CD4-positive, alpha-beta memory T cell (primary cell): ENCODE measurements at regions of chr4 and their contacts with region 1.

Region 1: DNA sequence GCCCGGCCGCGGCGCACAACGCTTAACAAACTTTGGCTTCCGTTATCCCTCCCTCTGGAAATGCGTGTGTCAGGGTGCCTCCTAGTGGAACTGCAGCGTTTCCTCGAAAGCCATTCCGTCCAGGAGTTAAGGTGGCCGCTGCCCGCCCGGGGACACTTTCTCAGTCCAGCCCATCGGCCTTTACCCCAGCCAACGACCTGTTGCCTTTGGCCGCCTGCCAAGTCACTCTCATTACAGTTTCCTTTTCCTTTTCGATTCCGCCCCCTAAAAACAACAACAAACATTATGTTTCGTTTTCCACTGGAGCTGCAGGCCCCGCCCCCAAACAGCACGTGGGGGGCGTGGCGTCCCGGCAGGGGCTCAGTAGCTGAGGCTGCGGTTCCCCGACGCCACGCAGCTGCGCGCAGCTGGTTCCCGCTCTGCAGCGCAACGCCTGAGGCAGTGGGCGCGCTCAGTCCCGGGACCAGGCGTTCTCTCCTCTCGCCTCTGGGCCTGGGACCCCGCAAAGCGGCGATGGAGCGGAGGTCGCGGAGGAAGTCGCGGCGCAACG is at the start of gene HERC5:
- DNase-seq: peak; percentile 92 to 96 (median 95)
- H3K4me3 ChIP-seq: peak within 1 kb of the TSS; percentile 76 to 96
- H3K4me3 Mint-ChIP-seq: peak within 1 kb of the TSS; percentile 96 to 100 (median 100)
- H3K27ac ChIP-seq: peak within 1 kb of the TSS; percentile 71
- H3K27ac Mint-ChIP-seq: peak within 1 kb of the TSS; percentile 89 to 100 (median 100)
- H3K4me1 ChIP-seq: peaks cover 28% of the 10 kb centered on the region
- H3K4me1 Mint-ChIP-seq: peaks cover 21 to 37% (median 28%) of the 10 kb centered on the region in 4 donors
- H3K27me3 ChIP-seq: no peaks in the 10 kb centered on the region
- H3K27me3 Mint-ChIP-seq: no peaks in the 10 kb centered on the region
- total RNA-seq, gene HERC5: 18.6 to 22.1 TPM

Region 2: GRCh38 chr4:87838890-87839591 is 617.8 kb before region 1 on chr4:
- CTCF ChIA-PET with region 1: no interaction called
- POLR2A ChIA-PET with region 1: no interaction called
- intact Hi-C with region 1: no loop called
- DNase-seq: no peak
- H3K4me3 ChIP-seq: no peak overlapping the region
- H3K4me3 Mint-ChIP-seq: no peak overlapping the region
- H3K27ac ChIP-seq: no peak overlapping the region
- H3K27ac Mint-ChIP-seq: no peak overlapping the region
- H3K4me1 ChIP-seq: no peaks in the 10 kb centered on the region
- H3K4me1 Mint-ChIP-seq: no peaks in the 10 kb centered on the region
- H3K27me3 ChIP-seq: no peaks in the 10 kb centered on the region
- H3K27me3 Mint-ChIP-seq: peaks cover 11 to 18% of the 10 kb centered on the region in 2 donors

Region 3: GRCh38 chr4:88366460-88366859 is 90.4 kb before region 1 on chr4:
- CTCF ChIA-PET with region 1: interaction called, 10 read pairs
- POLR2A ChIA-PET with region 1: interaction called, 4 read pairs
- intact Hi-C with region 1: no loop called
- DNase-seq: no peak
- H3K4me3 ChIP-seq: no peak overlapping the region
- H3K4me3 Mint-ChIP-seq: no peak overlapping the region
- H3K27ac ChIP-seq: no peak overlapping the region
- H3K27ac Mint-ChIP-seq: no peak overlapping the region
- H3K4me1 ChIP-seq: no peaks in the 10 kb centered on the region
- H3K4me1 Mint-ChIP-seq: peaks cover 0 to 3% (median 0%) of the 10 kb centered on the region in 4 donors
- H3K27me3 ChIP-seq: no peaks in the 10 kb centered on the region
- H3K27me3 Mint-ChIP-seq: peaks cover 0 to 10% of the 10 kb centered on the region in 2 donors

Region 4: DNA sequence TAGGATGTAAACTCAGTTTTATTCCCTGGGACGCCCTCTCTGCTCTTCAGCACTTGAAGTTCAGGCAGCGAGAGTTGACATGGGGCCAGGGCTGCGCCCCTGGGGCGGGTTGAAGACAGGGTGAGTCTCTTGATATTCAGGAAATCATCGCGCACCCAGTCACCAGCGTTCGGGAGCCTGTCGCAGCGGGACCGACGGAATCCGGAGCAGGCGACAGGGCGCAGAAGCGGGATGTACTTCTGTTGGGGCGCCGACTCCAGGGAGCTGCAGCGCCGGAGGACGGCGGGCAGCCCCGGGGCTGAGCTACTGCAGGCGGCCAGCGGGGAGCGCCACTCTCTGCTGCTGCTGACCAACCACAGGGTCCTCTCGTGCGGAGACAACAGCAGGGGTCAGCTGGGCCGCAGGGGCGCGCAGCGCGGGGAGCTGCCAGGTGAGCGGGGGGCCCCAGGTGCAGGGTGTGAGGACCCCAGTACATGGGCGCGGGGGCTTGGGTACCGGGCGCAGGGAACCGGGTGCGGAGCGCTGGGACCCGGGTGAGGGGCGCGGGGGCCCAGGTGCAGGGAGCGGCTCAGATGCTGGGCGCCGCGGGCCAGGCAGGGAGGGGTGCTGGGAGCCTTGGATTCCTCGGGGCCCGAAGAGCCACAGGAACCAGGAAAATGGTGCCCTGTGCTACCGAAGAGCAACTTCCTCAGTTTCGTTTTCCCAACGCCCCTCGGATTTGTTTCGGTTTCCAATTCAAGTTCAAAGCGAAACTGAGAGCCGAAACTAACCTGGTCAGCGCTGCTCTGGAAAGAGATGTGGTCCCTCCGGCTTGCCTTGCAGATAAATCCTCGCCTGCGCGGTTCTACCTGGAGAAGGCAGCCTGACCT is 77.9 kb before region 1 on chr4 and contains the start of gene HERC6:
- CTCF ChIA-PET with region 1: interaction called, 11 read pairs
- POLR2A ChIA-PET with region 1: interaction called, 47 read pairs
- intact Hi-C with region 1: loop called (anchors 1 kb)
- DNase-seq: peak; percentile 74 to 89 (median 80)
- H3K4me3 ChIP-seq: peak within 1 kb of the TSS; percentile 82 to 96
- H3K4me3 Mint-ChIP-seq: peak within 1 kb of the TSS; percentile 95 to 99 (median 97)
- H3K27ac ChIP-seq: peak within 1 kb of the TSS; percentile 86
- H3K27ac Mint-ChIP-seq: peak within 1 kb of the TSS; percentile 94 to 98 (median 97)
- H3K4me1 ChIP-seq: peaks cover 37% of the 10 kb centered on the region
- H3K4me1 Mint-ChIP-seq: peaks cover 37 to 54% (median 43%) of the 10 kb centered on the region in 4 donors
- H3K27me3 ChIP-seq: no peaks in the 10 kb centered on the region
- H3K27me3 Mint-ChIP-seq: no peaks in the 10 kb centered on the region
- total RNA-seq, gene HERC6: 26.8 to 29.5 TPM

Region 5: DNA sequence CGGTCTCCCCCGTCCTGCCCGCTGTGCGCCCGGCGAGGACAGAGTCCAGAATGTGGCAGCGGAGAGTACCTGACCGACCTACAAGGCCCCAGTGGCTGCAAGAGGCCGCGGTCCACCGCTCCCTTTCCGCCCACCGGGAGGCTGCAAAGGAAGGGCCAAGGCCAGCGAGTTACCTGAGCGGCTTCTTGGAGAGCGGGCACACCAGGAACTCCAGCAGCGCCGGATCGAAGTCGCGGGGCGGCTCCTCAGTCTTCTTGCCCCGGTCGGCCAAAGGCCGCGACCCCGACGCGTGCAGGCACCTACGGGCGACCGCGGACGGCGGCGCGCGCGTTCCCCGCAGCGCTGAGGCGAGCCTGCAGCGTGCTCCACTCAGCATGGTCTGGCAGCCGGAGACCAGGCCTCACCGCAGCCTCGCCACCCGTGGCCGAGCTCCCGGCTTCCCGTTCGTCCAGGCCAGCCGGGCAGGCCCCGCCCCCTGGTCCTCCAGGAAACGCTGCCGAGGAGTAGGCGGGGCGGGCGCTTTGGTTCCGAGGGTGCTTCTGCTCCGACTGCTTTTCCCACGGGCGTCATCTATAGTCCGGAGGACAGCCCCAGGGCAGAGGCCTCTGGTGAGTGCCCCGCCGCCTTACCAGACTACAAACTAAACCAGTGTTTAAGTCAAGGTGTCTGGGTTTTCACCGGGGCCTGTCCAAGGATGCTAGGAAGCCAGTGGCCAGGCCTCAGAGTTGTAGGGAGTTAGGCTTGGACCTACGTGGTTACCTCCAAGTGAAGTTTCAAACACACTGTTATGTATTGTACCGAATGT is 66.7 kb after region 1 on chr4 and contains the start of gene PYURF:
- CTCF ChIA-PET with region 1: no interaction called
- POLR2A ChIA-PET with region 1: interaction called, 5 read pairs
- intact Hi-C with region 1: loop called (anchors 2 kb)
- DNase-seq: peak; percentile 60 to 73 (median 64)
- H3K4me3 ChIP-seq: peak within 1 kb of the TSS; percentile 62 to 69
- H3K4me3 Mint-ChIP-seq: peak within 1 kb of the TSS; percentile 91 to 97 (median 94)
- H3K27ac ChIP-seq: peak within 1 kb of the TSS; percentile 60
- H3K27ac Mint-ChIP-seq: peak within 1 kb of the TSS; percentile 89 to 96 (median 93)
- H3K4me1 ChIP-seq: peaks cover 17% of the 10 kb centered on the region
- H3K4me1 Mint-ChIP-seq: peaks cover 22 to 46% (median 32%) of the 10 kb centered on the region in 4 donors
- H3K27me3 ChIP-seq: no peaks in the 10 kb centered on the region
- H3K27me3 Mint-ChIP-seq: no peaks in the 10 kb centered on the region
- total RNA-seq, gene PYURF: 54.5 to 60.4 TPM

Region 6: DNA sequence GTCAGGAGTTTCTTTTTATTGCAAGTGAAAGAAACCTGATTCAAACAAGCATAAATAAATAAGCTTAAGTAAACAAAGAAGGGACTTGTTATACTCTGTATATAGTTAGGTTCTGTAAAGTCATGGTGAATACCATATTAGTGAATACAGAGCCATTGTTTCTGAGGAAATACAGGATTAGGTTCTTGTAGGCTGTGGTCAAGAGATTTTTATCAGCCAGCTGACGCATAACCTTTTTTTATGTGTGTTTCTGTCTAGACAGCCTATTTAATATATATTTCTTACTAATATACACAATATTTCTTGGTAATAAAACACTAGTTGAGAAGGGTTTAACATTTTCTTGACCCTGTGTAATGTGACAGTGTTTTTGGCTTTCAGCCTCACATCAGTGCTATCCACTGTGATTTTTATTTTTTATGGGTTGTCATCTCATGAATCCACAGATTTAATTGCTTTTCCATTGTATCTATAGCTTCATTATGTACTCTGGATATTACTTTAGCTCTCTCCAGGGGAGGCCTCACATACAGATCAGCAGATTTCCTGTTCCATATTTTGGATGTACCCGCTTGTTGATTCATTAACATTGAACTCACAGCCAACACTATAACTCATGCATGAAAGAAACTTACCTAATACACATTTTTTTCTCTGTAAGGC is 143.5 kb after region 1 on chr4:
- CTCF ChIA-PET with region 1: no interaction called
- POLR2A ChIA-PET with region 1: no interaction called
- intact Hi-C with region 1: no loop called
- DNase-seq: no peak
- H3K4me3 ChIP-seq: no peak overlapping the region
- H3K4me3 Mint-ChIP-seq: peak overlapping the region in 5 of 8 donors; percentile 18 to 63 (median 22)
- H3K27ac ChIP-seq: no peak overlapping the region
- H3K27ac Mint-ChIP-seq: peak overlapping the region; percentile 24 to 78 (median 61)
- H3K4me1 ChIP-seq: peaks cover 70% of the 10 kb centered on the region
- H3K4me1 Mint-ChIP-seq: peaks cover 53 to 82% (median 70%) of the 10 kb centered on the region in 4 donors
- H3K27me3 ChIP-seq: no peaks in the 10 kb centered on the region
- H3K27me3 Mint-ChIP-seq: no peaks in the 10 kb centered on the region